ENCODE measurements at regions of chr19 and their contacts with region 1.

Region 1: DNA sequence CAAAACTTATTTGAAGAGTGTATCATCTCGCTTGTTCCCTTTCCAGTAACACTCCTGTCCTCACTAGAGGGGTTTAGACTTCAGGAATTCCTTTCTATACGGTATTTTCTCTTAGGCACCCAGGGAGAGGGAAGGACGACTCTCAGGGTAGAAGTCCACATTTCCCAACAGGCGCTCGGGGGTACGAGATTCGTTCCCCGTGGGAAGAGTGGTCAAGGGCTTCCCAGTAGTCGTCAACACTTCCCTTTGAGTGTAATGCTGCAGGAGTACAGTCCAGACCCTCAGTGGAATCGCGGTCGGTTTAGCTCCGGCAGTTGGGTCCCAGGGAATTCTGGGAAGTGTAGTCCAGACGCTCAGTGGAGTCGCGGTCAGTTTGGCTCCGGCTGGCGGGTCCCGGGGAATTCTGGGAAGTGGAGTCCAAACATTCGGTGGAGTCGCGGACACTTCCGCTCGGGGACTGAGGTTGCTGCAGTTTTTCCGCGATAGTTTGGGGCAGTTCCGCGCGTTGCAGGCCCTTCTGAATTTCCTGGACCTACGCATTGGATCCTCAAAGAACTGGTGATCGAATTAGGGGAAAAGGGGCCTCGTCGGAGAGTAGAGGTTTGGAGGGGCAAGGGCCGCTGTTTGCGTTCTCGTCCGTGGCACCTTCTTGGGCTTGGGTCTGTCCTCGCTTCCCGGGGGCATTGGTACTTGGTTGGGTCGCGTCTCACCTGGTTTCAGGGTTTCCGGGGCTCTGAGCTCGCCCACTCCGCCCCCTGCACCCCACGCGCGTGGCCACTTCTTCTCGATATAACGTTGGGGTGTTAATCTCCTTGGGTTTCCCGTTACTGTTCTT is at the start of gene ZNF224:
- DNase-seq: peak; percentile 88
- ATAC-seq: peak; percentile 99
- H3K4me3 ChIP-seq: peak within 1 kb of the TSS; percentile 87 to 95 (median 87)
- H3K27ac ChIP-seq: peak within 1 kb of the TSS; percentile 65
- H3K4me1 ChIP-seq: peaks cover 6% of the 10 kb centered on the region
- H3K27me3 ChIP-seq: no peaks in the 10 kb centered on the region; a peak in 1 of 5 replicates
- CTCF ChIP-seq: no peak
- EP300 ChIP-seq: 0 out of 4 replicates have a peak, but pooled peaks of 1 of the 2 experiments have one; percentile 16
- POLR2A ChIP-seq: peak; percentile 62 to 80
- RAD21 ChIP-seq: no peak
- total RNA-seq, gene ZNF224: 14.0 and 16.1 TPM in 2 replicates

Region 2: GRCh38 chr19:43983912-43984686 is 110.0 kb before region 1 on chr19 and contains the start of gene ZNF155:
- CTCF ChIA-PET with region 1: no interaction called
- POLR2A ChIA-PET with region 1: no interaction called
- in situ Hi-C with region 1: no loop called
- intact Hi-C with region 1: loop called (anchors 10 kb)
- DNase-seq: peak; percentile 87
- ATAC-seq: peak; percentile 100
- H3K4me3 ChIP-seq: peak within 1 kb of the TSS; percentile 67 to 79 (median 78)
- H3K27ac ChIP-seq: no peak within 1 kb of the TSS
- H3K4me1 ChIP-seq: no peaks in the 10 kb centered on the region
- H3K27me3 ChIP-seq: no peaks in the 10 kb centered on the region; a peak in 1 of 5 replicates
- CTCF ChIP-seq: no peak
- EP300 ChIP-seq: no peak
- POLR2A ChIP-seq: peak; percentile 22 to 23; a peak in 1 of 4 replicates
- RAD21 ChIP-seq: no peak
- total RNA-seq, gene ZNF155: 2.8 and 3.6 TPM in 2 replicates

Region 3: GRCh38 chr19:44051654-44052402 is 42.3 kb before region 1 on chr19 and contains the start of gene ZNF223:
- CTCF ChIA-PET with region 1: no interaction called
- POLR2A ChIA-PET with region 1: interaction called, 17 read pairs
- in situ Hi-C with region 1: no loop called
- intact Hi-C with region 1: no loop called
- DNase-seq: peak; percentile 94
- ATAC-seq: peak; percentile 99
- H3K4me3 ChIP-seq: peak within 1 kb of the TSS; percentile 73 to 78 (median 78)
- H3K27ac ChIP-seq: peak within 1 kb of the TSS; percentile 89
- H3K4me1 ChIP-seq: peaks cover 32% of the 10 kb centered on the region
- H3K27me3 ChIP-seq: no peaks in the 10 kb centered on the region; a peak in 1 of 5 replicates
- CTCF ChIP-seq: no peak
- EP300 ChIP-seq: peak in 1 of 2 experiments; percentile 30; a peak in 1 of 4 replicates
- POLR2A ChIP-seq: peak; percentile 62 to 78; a peak in 3 of 4 replicates
- RAD21 ChIP-seq: no peak
- total RNA-seq, gene ZNF223: 4.8 and 5.6 TPM in 2 replicates

Region 4: DNA sequence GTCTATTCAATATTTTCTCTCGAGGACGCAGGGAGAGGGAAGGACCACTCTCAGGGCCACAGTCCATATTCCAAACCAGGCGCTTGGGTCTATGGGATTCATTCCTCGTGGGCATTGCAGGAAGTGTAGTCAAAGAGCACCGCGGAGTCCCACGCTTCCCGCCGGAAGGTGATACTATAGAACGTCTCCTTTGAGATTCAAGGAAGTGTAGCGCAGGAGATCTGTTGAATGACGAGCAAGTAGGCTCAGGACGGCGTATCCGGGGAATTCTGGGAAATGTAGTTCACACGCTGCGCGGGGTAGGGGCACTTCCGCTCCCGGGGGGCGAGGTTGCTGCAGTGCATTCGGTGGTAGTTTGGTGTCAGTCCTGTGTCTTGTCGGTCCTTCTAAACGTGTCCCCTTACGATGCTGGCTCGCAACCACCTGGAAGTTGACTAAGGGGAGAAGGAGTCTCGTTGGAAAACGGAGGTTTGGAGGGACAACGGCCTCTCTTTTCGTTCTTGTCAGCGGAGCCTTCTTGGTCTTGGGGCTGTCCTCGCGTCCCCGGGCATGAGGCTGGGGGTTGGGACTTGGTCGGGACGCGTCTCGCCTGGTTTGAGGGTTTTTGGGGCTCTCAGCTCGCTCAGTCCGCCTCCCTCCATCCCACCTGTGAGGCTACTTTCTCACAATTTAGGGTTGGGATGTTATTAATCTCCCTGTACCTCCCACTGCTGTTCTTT is 22.2 kb before region 1 on chr19 and contains the start of gene ZNF284:
- CTCF ChIA-PET with region 1: no interaction called
- POLR2A ChIA-PET with region 1: no interaction called
- in situ Hi-C with region 1: no loop called
- intact Hi-C with region 1: loop called (anchors 1 kb)
- DNase-seq: peak; percentile 84
- ATAC-seq: peak; percentile 99
- H3K4me3 ChIP-seq: peak within 1 kb of the TSS; percentile 70 to 90 (median 83)
- H3K27ac ChIP-seq: peak within 1 kb of the TSS; percentile 55
- H3K4me1 ChIP-seq: peaks cover 17% of the 10 kb centered on the region
- H3K27me3 ChIP-seq: no peaks in the 10 kb centered on the region; a peak in 1 of 5 replicates
- CTCF ChIP-seq: no peak
- EP300 ChIP-seq: no peak
- POLR2A ChIP-seq: peak; percentile 47 to 80; a peak in 3 of 4 replicates
- RAD21 ChIP-seq: no peak
- total RNA-seq, gene ZNF284: 2.3 and 3.2 TPM in 2 replicates

Region 5: DNA sequence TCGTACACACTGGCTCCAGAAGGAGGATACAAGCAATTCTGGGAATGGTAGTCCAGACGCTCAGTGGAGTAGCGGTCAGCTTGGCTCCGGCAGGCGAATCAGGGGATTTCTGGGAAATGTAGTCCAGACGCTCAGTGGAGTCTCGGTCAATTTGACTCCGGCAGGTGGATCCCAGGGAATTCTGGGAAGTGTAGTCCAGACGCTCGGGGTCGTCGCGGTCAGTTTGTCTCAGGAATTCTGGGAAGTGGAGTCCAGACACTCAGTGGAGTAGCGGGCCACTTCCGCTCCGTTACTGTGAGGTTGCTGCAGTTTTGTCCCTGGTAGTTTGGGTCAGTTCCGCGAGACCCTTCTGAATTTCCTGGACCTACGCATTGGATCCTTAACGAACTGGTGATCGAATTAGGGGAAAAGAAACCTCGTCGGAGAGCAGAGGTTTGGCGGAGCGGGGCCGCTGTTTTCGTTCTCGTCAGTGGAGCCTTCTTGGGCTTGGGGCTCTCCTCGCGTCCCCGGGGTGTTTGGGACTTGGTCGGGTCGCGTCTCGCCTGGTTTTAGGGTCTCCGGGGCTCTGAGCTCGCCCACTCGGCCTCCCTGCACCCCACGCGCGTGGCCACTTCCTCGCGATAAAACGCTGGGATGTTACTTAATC is 19.1 kb after region 1 on chr19 and contains the start of gene ZNF225:
- CTCF ChIA-PET with region 1: no interaction called
- POLR2A ChIA-PET with region 1: interaction called, 11 read pairs
- in situ Hi-C with region 1: no loop called
- intact Hi-C with region 1: no loop called
- DNase-seq: peak; percentile 97
- ATAC-seq: peak; percentile 99
- H3K4me3 ChIP-seq: peak within 1 kb of the TSS; percentile 82 to 92 (median 82)
- H3K27ac ChIP-seq: peak within 1 kb of the TSS; percentile 51
- H3K4me1 ChIP-seq: peaks cover 14% of the 10 kb centered on the region
- H3K27me3 ChIP-seq: no peaks in the 10 kb centered on the region; a peak in 1 of 5 replicates
- CTCF ChIP-seq: no peak
- EP300 ChIP-seq: peak in 1 of 2 experiments; percentile 27; a peak in 1 of 4 replicates
- POLR2A ChIP-seq: peak; percentile 56 to 71
- RAD21 ChIP-seq: 0 out of 2 replicates have a peak, but pooled peaks have one; percentile 6
- total RNA-seq, gene ZNF225: 3.3 and 4.6 TPM in 2 replicates

Region 6: GRCh38 chr19:44151491-44151890 is 57.3 kb after region 1 on chr19:
- CTCF ChIA-PET with region 1: no interaction called
- POLR2A ChIA-PET with region 1: no interaction called
- in situ Hi-C with region 1: no loop called
- intact Hi-C with region 1: no loop called
- DNase-seq: no peak
- ATAC-seq: no peak
- H3K4me3 ChIP-seq: no peak overlapping the region
- H3K27ac ChIP-seq: no peak overlapping the region
- H3K4me1 ChIP-seq: no peaks in the 10 kb centered on the region
- H3K27me3 ChIP-seq: no peaks in the 10 kb centered on the region
- CTCF ChIP-seq: no peak
- EP300 ChIP-seq: no peak
- POLR2A ChIP-seq: no peak
- RAD21 ChIP-seq: no peak

Measured in HepG2 (cell line).